Activated naive CD4-positive, alpha-beta T cell treated with anti-CD3 and anti-CD28 coated beads for 36 hours (primary cell): ENCODE measurements at regions of chr12 and their contacts with region 1.

Region 1: GRCh38 chr12:47307680-47308399 is 228.1 kb upstream of the AMIGO2 start:
- DNase-seq: peak; percentile 74
- H3K4me3 Mint-ChIP-seq: peak overlapping the region; percentile 91
- H3K27ac Mint-ChIP-seq: peak overlapping the region; percentile 98
- H3K4me1 Mint-ChIP-seq: peaks cover 73% of the 10 kb centered on the region
- H3K27me3 Mint-ChIP-seq: no peaks in the 10 kb centered on the region

Region 2: GRCh38 chr12:47216150-47216677 is 91.6 kb before region 1 on chr12:
- CTCF ChIA-PET with region 1: interaction called, 3 read pairs
- intact Hi-C with region 1: loop called (anchors 1 kb)
- DNase-seq: peak; percentile 83
- H3K4me3 Mint-ChIP-seq: peak overlapping the region; percentile 94
- H3K27ac Mint-ChIP-seq: peak overlapping the region; percentile 100
- H3K4me1 Mint-ChIP-seq: peaks cover 12% of the 10 kb centered on the region
- H3K27me3 Mint-ChIP-seq: no peaks in the 10 kb centered on the region